Aorta (tissue), 5 donors: ENCODE measurements at regions of chr6 and their contacts with region 1.

Region 1: DNA sequence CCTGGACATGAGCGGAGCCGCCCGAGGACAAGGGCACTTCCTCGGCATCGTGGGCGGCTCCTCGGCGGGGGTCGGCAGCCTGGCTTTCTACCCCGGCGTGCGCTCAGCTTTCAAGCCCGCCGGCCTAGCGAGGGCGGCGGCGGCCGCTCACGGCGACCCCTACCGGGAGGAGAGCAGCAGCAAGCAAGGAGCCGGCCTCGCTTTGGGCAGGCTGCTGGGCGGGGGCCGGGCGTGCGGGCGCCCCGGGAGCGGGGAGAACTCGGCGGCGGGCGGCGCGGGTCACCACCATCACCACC is 6.7 kb downstream of the PRDM13 start:
- DNase-seq: peak; percentile 61 to 85
- ATAC-seq: peak; percentile 58
- H3K4me3 ChIP-seq: peak overlapping the region; percentile 18 to 19
- H3K27ac ChIP-seq: no peak overlapping the region
- H3K4me1 ChIP-seq: no peaks in the 10 kb centered on the region
- H3K27me3 ChIP-seq: peaks cover 0 to 3% of the 10 kb centered on the region in 2 donors

Region 2: DNA sequence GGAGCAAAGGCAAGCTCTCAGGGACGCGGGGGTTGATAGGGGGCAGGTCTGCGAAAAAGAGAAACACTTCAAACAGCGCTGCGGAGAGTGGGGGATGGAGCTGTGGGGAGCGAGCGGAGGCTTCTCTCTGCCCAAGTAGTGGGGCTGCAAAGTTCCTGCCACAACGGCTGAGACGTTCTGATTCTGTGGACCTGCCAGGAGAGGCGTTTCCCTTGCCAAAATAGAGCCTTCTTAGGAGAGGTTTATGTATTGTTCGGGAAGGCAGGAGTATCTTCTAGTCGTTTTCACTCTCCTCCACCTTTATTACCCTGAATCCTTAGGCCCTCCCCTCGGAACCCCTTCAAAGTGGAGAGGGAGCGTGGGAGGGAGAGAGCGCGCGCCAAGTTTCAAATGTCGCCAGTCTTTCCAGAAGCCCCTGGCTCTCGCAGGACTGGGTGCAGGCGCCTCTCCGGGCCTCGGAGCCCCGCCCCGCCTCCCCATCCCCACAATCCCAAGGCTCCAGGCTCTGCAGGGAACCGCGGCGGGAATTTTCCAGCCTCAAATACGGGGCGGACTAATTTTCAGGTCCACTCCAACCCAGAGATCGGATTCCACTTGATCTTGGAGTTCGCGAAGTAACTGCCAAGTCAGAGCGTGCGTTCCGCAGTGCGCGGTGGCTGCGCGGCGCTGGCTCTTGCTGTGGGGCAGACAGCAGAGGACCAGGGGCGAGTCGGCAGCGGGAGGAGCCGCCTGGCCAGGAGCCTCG is 789.0 kb before region 1 on chr6:
- intact Hi-C with region 1: loop called in 1 of 2 experiments (anchors 10 kb)
- DNase-seq: no peak
- ATAC-seq: peak; percentile 29
- H3K4me3 ChIP-seq: no peak overlapping the region
- H3K27ac ChIP-seq: no peak overlapping the region
- H3K4me1 ChIP-seq: no peaks in the 10 kb centered on the region
- H3K27me3 ChIP-seq: peaks cover 2% of the 10 kb centered on the region in 2 donors